AG04450 (cell line): ENCODE measurements at regions of chr6 and their contacts with region 1.

Region 1: GRCh38 chr6:129598244-129599187 is 111.5 kb downstream of the ARHGAP18 start:
- DNase-seq: peak; percentile 49
- H3K4me3 ChIP-seq: no peak overlapping the region
- H3K27ac ChIP-seq: no peak overlapping the region
- H3K27me3 ChIP-seq: no peaks in the 10 kb centered on the region
- CTCF ChIP-seq: peak; percentile 73

Region 2: DNA sequence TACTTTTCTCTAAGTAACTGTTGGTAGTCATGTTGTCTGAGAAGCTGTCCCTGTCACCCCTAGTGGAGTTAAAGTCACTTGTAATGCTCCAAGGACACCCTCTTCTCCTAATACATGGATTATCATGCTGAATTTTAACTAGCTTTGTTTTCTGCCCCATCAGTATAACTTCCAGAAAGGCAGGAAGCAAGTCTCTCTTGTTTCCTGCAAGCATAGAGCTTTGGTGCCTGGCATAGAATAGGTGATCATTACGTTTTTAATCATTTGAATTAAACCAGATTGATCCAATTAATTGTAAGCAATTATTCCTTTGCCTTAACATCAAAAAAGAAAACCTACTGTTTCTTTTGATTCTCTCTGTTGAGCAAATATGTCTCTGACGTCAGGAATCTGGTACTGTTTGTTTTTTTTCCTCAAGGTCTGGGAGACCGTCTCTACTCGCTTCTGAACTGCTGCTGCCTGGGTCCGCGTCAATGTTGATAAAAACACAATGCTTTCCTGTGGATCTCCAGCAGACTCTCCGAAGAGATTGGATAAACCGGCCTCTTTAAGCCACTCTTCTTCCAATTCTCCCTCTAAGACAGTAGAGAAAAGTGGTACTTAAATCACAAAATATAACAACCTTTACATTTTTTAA is 39.7 kb after region 1 on chr6:
- CTCF ChIA-PET with region 1: interaction called, 12 read pairs
- POLR2A ChIA-PET with region 1: no interaction called
- DNase-seq: peak; percentile 55
- H3K4me3 ChIP-seq: no peak overlapping the region
- H3K27ac ChIP-seq: no peak overlapping the region
- H3K27me3 ChIP-seq: no peaks in the 10 kb centered on the region
- CTCF ChIP-seq: no peak

Region 3: DNA sequence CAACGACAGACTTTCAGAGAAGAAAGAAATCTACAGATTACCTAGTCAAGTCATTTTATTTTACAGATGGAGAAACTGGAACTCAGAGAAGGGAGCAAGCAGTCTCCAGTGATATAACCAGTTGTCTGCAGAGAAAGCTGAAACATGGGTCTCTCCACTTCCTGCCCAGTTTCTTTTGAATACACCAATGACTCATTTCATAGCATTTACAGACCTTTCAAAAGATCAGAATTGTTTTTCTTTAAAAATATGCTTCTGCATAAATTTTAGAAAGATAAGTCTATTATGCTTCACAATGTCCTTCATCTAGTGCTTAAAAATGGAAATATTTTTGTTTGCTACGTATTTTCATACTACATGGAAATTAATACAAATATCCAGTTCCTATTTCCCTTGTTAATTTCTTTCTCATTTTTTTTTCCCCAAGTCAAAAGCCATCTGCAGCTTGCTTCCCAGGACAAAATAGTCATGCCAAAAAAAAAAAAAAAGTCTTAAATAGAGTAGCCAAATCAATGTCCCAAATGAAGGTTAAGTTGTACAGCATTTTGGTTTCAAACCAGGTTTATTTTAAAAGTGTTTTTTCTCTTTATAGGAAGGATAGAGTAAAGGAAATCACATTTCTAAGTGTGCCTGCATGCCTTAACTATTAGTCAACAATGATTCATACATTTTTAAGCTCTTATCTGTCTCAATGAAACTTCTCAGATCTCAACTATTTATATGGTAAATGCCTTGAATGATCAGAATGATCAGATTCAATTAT is 74.5 kb after region 1 on chr6:
- CTCF ChIA-PET with region 1: interaction called, 14 read pairs
- POLR2A ChIA-PET with region 1: no interaction called
- DNase-seq: peak; percentile 42
- H3K4me3 ChIP-seq: 0 out of 2 replicates have a peak overlapping the region, but pooled peaks have one; percentile 2
- H3K27ac ChIP-seq: peak overlapping the region; percentile 63
- H3K27me3 ChIP-seq: no peaks in the 10 kb centered on the region
- CTCF ChIP-seq: no peak

Region 4: GRCh38 chr6:129766959-129767728 is 168.6 kb after region 1 on chr6:
- CTCF ChIA-PET with region 1: interaction called, 24 read pairs
- POLR2A ChIA-PET with region 1: no interaction called
- DNase-seq: peak; percentile 55
- H3K4me3 ChIP-seq: peak overlapping the region; percentile 64
- H3K27ac ChIP-seq: no peak overlapping the region
- H3K27me3 ChIP-seq: no peaks in the 10 kb centered on the region
- CTCF ChIP-seq: no peak

Region 5: DNA sequence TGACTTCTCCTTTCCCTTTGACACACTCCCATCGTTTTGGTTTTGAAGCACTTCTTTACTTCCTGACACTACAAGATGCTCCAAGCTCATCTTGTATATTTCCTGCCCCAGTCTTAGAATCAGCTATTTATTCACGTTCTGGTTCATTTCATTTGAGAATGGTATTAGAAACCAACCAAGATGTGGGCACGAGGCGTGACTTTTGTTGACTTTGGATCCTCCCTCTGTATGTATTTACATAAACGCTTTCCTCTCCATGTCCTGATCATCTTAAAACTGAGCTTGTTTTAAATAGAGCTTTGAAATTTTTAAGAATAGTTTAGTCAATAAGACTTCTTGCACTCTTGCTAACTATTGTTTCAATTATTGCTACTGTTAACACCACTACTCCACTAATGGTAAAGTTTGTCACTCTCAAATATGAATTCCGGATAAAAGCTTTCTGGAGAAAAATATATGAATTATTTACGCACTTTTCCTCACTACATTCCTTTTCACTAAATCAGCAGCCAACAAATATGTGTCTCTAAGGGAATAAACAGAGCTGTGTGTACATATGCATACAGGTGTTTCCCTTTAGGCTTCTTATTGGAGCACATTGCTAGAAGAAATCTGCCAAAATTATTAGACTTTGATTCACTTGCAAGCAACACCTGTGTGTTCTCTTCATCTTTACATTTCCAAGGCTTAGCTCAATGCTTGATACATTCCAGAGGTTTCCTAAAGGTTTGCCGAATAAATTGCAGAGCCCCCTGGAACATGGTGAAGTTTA is 339.9 kb after region 1 on chr6:
- CTCF ChIA-PET with region 1: interaction called, 11 read pairs
- POLR2A ChIA-PET with region 1: no interaction called
- DNase-seq: no peak
- H3K4me3 ChIP-seq: no peak overlapping the region
- H3K27ac ChIP-seq: no peak overlapping the region
- H3K27me3 ChIP-seq: no peaks in the 10 kb centered on the region
- CTCF ChIP-seq: no peak